Left ventricle myocardium superior (tissue), 1 donor: ENCODE measurements at regions of chr6 and their contacts with region 1.

Region 1: DNA sequence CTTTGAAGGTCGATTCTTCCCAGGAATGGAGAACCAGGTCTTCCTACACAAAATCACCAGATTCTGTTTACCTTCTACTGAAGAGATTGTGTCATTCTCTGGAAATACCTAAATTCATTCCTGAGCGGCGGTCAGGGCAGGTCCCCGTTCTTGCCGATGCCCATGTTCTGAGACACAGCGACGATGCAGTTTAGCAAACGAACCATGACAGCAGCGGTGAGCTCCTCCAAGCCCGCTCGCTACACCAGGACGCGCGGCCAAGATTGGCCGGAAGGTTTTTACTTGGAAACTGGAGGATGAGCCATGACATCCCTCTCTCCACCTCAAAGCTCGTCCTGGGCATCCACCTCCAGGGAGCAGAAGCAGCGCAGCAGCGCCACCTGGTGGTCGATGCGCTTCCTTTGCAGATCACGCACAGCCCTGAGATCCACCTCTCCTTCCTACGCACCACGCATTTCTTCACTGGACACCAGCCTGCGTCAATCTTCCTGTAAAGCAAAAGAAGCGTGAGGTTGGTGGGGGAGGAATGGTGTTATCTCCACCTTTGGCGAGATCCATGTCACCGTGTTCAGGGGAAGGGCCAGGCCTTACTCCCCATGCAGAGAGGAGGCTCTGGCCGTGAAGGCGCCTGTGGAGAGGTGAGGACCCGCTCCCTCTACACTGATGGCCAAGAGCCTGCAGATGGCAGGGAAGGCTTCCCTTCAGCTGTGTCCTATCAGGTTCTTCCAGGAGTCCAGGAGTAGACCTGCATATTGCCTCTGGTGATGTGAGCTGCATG is 9.9 kb upstream of the HLA-B start:
- DNase-seq: peak; percentile 95
- ATAC-seq: peak; percentile 100

Region 2: DNA sequence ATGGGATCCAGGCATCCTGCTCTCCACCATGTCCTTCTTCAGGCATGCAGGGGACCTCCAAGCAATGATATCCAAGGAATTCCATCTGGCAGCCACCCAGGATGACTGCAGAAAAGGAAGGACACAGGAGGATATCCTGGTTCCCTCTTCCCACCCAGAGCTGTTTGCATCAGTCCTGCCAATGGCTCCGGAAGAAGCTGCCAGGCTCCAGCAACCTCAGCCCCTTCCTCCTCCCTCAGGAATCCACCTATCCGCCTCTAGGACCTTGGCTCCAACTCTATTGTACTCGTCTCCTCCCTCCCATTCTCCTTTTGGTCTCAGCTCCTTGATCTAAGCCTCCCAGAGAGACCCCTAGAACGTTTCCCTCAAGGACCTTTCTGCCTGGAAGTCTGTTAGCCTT is 227.3 kb before region 1 on chr6:
- intact Hi-C with region 1: loop called (anchors 5 kb)
- DNase-seq: no peak
- ATAC-seq: no peak

Region 3: DNA sequence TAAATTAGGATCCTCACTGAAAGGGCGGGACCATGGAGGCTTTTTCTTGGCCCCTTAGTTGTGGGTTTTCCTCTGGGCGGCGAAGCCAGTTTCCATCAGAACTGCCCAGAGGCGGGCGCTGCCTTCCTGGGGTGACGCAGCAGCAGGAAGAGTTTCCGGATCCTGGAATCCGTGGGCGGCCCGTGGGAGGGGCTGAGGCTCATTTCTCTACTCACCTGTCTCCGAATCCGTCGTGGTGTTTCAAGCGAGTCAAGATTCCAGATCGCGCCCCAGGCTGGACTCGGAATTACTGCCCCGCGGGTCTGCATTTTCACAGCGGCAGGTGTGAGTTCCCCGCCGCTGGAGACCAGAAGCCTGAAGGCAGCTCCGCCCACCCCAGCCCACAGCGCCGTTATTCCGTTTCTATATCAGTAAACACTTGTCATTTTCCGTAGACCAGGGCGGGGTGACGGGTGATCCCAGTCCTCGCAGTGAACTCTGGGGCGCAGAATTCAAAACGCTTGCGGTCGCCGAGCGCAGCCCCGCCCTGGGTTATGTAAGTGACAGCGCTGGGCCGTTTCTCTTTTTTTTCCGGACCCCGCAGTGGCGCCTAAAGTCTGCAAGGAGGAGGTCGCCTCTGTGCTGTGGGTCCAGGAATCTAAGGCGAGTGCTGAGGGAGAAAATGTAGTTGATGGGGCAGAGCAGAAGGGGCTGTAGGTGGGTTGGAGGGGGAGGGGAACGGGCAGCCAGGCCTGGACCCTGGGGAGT is 169.2 kb before region 1 on chr6:
- intact Hi-C with region 1: loop called (anchors 2 kb)
- DNase-seq: peak; percentile 93
- ATAC-seq: peak; percentile 89

Region 4: GRCh38 chr6:31225735-31226134 is 141.1 kb before region 1 on chr6:
- intact Hi-C with region 1: no loop called
- DNase-seq: no peak
- ATAC-seq: no peak

Region 5: DNA sequence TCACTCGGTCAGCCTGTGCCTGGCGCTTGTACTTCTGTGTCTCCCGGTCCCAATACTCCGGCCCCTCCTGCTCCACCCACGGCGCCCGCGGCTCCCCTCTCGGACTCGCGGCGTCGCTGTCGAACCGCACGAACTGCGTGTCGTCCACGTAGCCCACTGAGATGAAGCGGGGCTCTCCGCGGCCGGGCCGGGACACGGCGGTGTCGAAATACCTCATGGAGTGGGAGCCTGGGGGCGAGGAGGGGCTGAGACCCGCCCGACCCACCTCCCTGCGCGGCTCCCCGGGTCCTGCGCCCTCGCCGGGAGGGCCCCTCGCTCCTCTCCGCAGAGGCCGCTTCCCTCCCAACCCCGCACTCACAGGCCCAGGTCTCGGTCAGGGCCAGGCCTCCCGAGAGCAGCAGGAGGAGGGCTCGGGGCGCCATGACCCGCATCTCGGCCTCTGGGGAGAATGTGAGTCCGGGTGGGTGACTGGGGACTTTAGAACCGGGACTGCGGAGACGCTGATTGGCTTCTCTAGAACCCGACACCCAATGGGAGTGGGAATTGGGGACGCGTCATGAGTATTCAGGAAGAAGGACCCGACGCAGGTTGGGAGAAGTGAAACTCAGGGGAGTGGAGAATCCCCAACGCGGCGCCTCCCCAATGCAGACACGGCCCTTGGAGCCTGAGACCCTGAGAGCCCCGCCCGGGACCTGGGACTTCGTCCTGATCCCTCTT is 95.1 kb before region 1 on chr6 and contains the start of gene HLA-C:
- intact Hi-C with region 1: loop called (anchors 10 kb)
- DNase-seq: peak; percentile 84
- ATAC-seq: peak; percentile 99
- total RNA-seq, gene HLA-C: 167 TPM